ENCODE measurements at regions of chr12 and their contacts with region 1.

Region 1: DNA sequence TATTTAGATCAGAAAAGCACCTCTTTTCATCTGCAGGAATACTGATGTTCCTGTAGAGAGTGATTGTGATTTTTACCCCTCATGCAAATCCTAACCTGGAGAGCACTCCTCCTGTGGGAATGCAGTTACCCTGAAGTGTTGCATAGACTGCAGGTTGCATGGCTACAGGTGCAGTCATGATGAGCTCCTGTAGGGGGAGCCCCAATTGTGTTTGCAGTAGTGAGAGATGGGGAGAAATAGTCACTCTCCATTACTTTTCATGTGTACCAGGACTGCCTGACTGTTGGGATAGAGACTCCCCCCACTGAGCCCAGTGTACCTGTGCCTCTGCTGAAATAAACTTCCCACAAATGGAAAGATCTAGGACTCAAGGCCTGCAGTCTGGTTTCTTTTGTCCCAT is 1086.5 kb downstream of the SLC6A15 start:
- DNase-seq: peak; percentile 54
- H3K4me3 Mint-ChIP-seq: no peak overlapping the region
- H3K27ac Mint-ChIP-seq: no peak overlapping the region
- H3K4me1 Mint-ChIP-seq: no peaks in the 10 kb centered on the region
- H3K27me3 Mint-ChIP-seq: no peaks in the 10 kb centered on the region

Region 2: GRCh38 chr12:84341473-84342193 is 515.5 kb after region 1 on chr12:
- CTCF ChIA-PET with region 1: no interaction called
- intact Hi-C with region 1: no loop called
- DNase-seq: no peak
- H3K4me3 Mint-ChIP-seq: no peak overlapping the region
- H3K27ac Mint-ChIP-seq: no peak overlapping the region
- H3K4me1 Mint-ChIP-seq: no peaks in the 10 kb centered on the region
- H3K27me3 Mint-ChIP-seq: no peaks in the 10 kb centered on the region

Region 3: DNA sequence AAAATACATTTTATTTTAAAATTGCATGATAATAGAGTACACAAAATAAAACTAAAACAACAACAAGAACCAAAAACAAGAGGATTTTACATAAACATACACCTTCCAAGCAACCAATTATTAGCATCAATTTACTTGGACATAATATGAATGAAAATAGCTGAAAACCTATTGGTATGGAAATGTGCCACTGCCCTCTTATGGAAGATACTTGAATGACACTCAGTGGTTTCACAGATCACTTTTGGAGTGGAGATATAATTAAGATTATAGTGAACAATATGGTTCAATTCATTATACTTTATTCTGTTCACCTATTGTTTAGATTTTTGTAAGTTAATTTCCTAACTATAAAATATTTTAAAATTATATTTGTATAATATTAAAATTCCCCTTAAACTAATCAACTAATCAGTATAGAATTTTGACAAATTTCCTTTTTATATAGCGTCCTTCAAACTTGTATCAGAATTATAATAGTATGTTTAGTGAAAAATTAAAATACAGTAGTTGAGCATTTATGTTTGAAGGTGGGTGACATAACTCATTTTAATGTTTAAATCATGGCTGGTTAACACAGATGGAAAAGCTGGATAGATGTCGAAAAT is 1016.4 kb after region 1 on chr12:
- CTCF ChIA-PET with region 1: interaction called, 3 read pairs
- intact Hi-C with region 1: loop called (anchors 2 kb)
- DNase-seq: peak; percentile 13
- H3K4me3 Mint-ChIP-seq: no peak overlapping the region
- H3K27ac Mint-ChIP-seq: no peak overlapping the region
- H3K4me1 Mint-ChIP-seq: peaks cover 14% of the 10 kb centered on the region
- H3K27me3 Mint-ChIP-seq: no peaks in the 10 kb centered on the region

Measured in activated naive CD4-positive, alpha-beta T cell treated with anti-CD3 and anti-CD28 coated beads for 36 hours (primary cell).